ENCODE measurements at regions of chr6 and their contacts with region 1.

Region 1: GRCh38 chr6:151014404-151015100 is 149.1 kb downstream of the MTHFD1L start:
- DNase-seq: peak; percentile 74 to 75
- H3K4me3 ChIP-seq: no peak overlapping the region
- H3K4me3 Mint-ChIP-seq: no peak overlapping the region
- H3K27ac Mint-ChIP-seq: no peak overlapping the region
- H3K4me1 ChIP-seq: no peaks in the 10 kb centered on the region
- H3K4me1 Mint-ChIP-seq: no peaks in the 10 kb centered on the region
- H3K27me3 ChIP-seq: no peaks in the 10 kb centered on the region
- H3K27me3 Mint-ChIP-seq: no peaks in the 10 kb centered on the region
- CTCF ChIP-seq: peak; percentile 96 to 97

Region 2: DNA sequence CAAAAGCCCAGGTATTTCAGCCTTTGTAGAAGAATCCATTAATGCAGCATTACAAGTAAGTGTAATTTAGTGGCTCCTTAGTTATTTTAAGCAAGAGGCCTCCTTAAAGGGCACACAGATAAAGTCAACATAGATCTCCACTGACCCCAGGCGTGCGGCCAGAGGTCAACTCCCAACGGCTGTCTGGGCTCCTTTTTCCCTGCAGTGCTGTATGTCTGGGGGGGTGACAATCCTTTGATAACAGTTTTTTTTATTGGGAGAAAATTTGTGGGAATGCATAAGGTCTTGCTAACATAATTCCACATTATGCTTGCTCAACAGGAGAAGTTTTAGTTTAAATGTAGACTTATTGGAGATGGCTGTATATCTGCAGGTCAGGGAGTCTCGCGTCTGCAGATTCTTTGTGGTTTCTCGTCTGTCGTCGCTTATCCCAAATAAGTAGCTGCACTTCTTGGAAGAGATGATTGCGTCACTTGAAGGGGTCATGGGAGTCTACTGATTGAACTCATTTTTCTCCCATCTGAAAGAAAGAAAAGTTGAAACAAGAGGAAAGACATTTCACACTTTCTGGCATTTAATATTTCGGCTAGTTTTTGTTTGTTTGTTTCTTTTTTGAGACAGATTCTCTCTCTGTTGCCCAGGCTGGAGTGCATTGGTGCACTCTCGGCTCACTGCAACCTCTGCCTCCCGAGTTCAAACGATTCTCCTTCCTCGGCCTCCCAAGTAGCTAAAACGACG is 73.5 kb after region 1 on chr6:
- CTCF ChIA-PET with region 1: no interaction called
- POLR2A ChIA-PET with region 1: no interaction called
- intact Hi-C with region 1: loop called (anchors 10 kb)
- DNase-seq: peak; percentile 15 to 39
- H3K4me3 ChIP-seq: no peak overlapping the region
- H3K4me3 Mint-ChIP-seq: no peak overlapping the region
- H3K27ac Mint-ChIP-seq: no peak overlapping the region
- H3K4me1 ChIP-seq: peaks cover 10% of the 10 kb centered on the region
- H3K4me1 Mint-ChIP-seq: peaks cover 6% of the 10 kb centered on the region
- H3K27me3 ChIP-seq: no peaks in the 10 kb centered on the region
- H3K27me3 Mint-ChIP-seq: no peaks in the 10 kb centered on the region
- CTCF ChIP-seq: no peak

Region 3: DNA sequence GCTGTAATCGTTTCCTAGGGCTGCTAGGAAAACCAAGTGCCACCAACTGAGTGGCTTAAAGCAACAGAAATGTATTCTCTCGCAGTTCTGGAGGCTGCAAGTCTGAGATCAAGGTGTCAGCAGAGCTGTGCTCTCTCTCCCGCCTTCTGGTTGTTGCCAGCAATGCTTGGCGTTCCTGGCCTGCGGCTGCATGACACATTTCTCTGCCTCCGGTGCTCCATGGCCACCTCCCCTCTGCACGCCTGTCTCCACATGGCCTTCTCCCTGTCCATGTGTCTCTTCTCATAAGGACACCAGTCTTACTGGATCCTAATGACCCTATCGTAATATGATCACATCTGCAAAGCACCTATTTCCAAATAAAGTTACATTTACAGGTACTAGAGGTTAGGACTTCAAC is 133.6 kb after region 1 on chr6:
- CTCF ChIA-PET with region 1: no interaction called
- POLR2A ChIA-PET with region 1: no interaction called
- intact Hi-C with region 1: no loop called
- DNase-seq: no peak
- H3K4me3 ChIP-seq: no peak overlapping the region
- H3K4me3 Mint-ChIP-seq: no peak overlapping the region
- H3K27ac Mint-ChIP-seq: no peak overlapping the region
- H3K4me1 ChIP-seq: no peaks in the 10 kb centered on the region
- H3K4me1 Mint-ChIP-seq: no peaks in the 10 kb centered on the region
- H3K27me3 ChIP-seq: no peaks in the 10 kb centered on the region
- H3K27me3 Mint-ChIP-seq: no peaks in the 10 kb centered on the region
- CTCF ChIP-seq: no peak

Region 4: GRCh38 chr6:151323791-151324487 is 309.4 kb after region 1 on chr6:
- CTCF ChIA-PET with region 1: interaction called, 83 read pairs
- POLR2A ChIA-PET with region 1: interaction called, 3 read pairs
- intact Hi-C with region 1: loop called (anchors 1 kb)
- DNase-seq: peak; percentile 72 to 87
- H3K4me3 ChIP-seq: no peak overlapping the region
- H3K4me3 Mint-ChIP-seq: peak overlapping the region; percentile 24
- H3K27ac Mint-ChIP-seq: no peak overlapping the region
- H3K4me1 ChIP-seq: peaks cover 4% of the 10 kb centered on the region; the same call in 1 of the 2 replicates
- H3K4me1 Mint-ChIP-seq: no peaks in the 10 kb centered on the region
- H3K27me3 ChIP-seq: peaks cover 5% of the 10 kb centered on the region; the same call in 1 of the 2 replicates
- H3K27me3 Mint-ChIP-seq: peaks cover 8% of the 10 kb centered on the region
- CTCF ChIP-seq: peak; percentile 94 to 96

Region 5: GRCh38 chr6:151330134-151330696 is 315.7 kb after region 1 on chr6:
- CTCF ChIA-PET with region 1: interaction called, 83 read pairs
- POLR2A ChIA-PET with region 1: interaction called, 3 read pairs
- intact Hi-C with region 1: loop called (anchors 1 kb)
- DNase-seq: no peak
- H3K4me3 ChIP-seq: no peak overlapping the region
- H3K4me3 Mint-ChIP-seq: no peak overlapping the region
- H3K27ac Mint-ChIP-seq: no peak overlapping the region
- H3K4me1 ChIP-seq: peaks cover under 1% of the 10 kb centered on the region; the same call in 1 of the 2 replicates
- H3K4me1 Mint-ChIP-seq: no peaks in the 10 kb centered on the region
- H3K27me3 ChIP-seq: peaks cover under 1% of the 10 kb centered on the region; the same call in 1 of the 2 replicates
- H3K27me3 Mint-ChIP-seq: no peaks in the 10 kb centered on the region
- CTCF ChIP-seq: no peak

Region 6: GRCh38 chr6:151339369-151339768 is 324.8 kb after region 1 on chr6:
- CTCF ChIA-PET with region 1: interaction called, 62 read pairs
- POLR2A ChIA-PET with region 1: no interaction called
- intact Hi-C with region 1: loop called (anchors 1 kb)
- DNase-seq: no peak
- H3K4me3 ChIP-seq: no peak overlapping the region
- H3K4me3 Mint-ChIP-seq: no peak overlapping the region
- H3K27ac Mint-ChIP-seq: no peak overlapping the region
- H3K4me1 ChIP-seq: no peaks in the 10 kb centered on the region
- H3K4me1 Mint-ChIP-seq: no peaks in the 10 kb centered on the region
- H3K27me3 ChIP-seq: no peaks in the 10 kb centered on the region
- H3K27me3 Mint-ChIP-seq: no peaks in the 10 kb centered on the region
- CTCF ChIP-seq: no peak

Measured in Caco-2 (cell line).